ENCODE measurements at regions of chr4 and their contacts with region 1.

Region 1: DNA sequence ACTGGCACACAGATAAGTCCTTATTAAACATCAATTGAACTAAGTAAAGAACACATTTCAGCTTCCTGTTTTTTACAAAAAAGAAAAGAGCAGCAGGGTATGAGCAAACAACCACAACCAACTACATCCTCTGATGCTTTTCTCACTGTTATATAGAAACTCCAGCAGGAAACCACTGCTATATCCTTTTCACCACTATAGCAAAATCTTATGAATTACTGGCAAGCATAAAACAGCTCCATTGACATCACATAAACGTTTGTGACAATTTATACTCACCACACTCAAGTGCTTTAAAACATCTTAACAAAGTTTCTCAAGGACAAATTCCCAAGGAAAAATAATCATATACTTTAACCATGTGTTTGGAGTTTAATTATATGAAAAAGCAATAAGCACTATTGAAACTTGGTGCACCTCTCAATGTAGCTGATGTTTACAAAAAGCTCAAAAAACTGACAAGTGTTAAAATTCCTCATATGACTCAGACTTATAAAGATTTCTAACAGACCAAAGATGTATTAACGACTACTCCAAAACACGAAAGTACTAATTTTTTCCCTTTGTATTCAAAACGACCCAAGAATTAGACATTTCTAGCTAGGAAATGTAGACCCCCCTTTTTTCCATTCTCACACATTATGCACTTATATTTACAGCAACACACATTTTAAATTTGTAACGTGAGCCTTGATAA is 12.9 kb downstream of the GPRIN3 start:
- DNase-seq: no peak
- H3K4me3 Mint-ChIP-seq: peak overlapping the region; percentile 49
- H3K27ac Mint-ChIP-seq: peak overlapping the region; percentile 94
- H3K4me1 Mint-ChIP-seq: peaks cover 79% of the 10 kb centered on the region
- H3K27me3 Mint-ChIP-seq: no peaks in the 10 kb centered on the region

Region 2: DNA sequence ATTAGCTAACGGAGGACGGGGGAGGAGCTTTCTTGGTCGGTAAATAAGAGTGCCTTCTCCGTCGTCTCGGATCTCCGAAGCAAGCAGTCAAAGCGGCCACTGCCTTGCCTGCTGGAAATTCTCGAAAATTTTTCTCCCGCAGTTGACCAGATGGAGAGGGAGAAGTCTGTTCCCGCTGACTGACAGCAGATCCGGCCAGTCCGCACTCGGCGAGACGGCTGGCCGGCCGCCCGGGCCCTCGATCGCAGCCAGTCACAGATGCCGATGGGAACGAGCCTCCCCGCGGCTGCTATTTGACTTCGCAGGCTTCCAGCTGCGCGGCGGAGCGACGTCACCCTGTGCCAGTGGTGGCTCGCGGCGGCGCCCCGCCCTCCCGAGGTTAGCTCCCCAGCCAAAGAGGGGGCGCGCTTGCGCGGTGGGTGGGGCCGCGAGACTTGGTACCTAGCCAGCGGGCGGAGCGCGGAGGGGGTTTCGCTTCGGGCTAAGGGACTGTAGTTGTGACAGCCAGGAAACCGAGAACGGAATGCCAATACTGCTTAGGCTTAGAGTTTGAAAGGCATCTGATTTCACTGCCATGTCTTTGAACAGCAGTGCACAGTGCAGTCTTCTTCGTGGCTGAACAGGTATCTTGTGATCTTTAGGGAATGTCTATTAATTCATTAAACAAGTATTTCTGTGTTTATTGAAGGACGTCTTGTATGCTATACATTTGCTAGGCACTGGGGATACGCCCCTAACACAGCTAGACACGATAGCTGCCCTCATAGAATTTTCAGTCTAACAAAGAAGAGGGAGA is 1010.1 kb before region 1 on chr4 and contains the start of gene PPM1K:
- CTCF ChIA-PET with region 1: no interaction called
- intact Hi-C with region 1: loop called (anchors 10 kb)
- DNase-seq: peak; percentile 99
- H3K4me3 Mint-ChIP-seq: peak within 1 kb of the TSS; percentile 89
- H3K27ac Mint-ChIP-seq: peak within 1 kb of the TSS; percentile 98
- H3K4me1 Mint-ChIP-seq: peaks cover 34% of the 10 kb centered on the region
- H3K27me3 Mint-ChIP-seq: no peaks in the 10 kb centered on the region
- total RNA-seq, gene PPM1K: 54.1 to 55.2 TPM

Region 3: GRCh38 chr4:88803600-88804096 is 491.1 kb before region 1 on chr4:
- CTCF ChIA-PET with region 1: no interaction called
- intact Hi-C with region 1: loop called (anchors 1 kb)
- DNase-seq: peak; percentile 60
- H3K4me3 Mint-ChIP-seq: no peak overlapping the region
- H3K27ac Mint-ChIP-seq: no peak overlapping the region
- H3K4me1 Mint-ChIP-seq: peaks cover 22% of the 10 kb centered on the region
- H3K27me3 Mint-ChIP-seq: no peaks in the 10 kb centered on the region

Region 4: GRCh38 chr4:89110986-89111832 is 183.5 kb before region 1 on chr4 and contains the start of gene TIGD2:
- CTCF ChIA-PET with region 1: no interaction called
- intact Hi-C with region 1: loop called (anchors 5 kb)
- DNase-seq: peak; percentile 81
- H3K4me3 Mint-ChIP-seq: peak within 1 kb of the TSS; percentile 76
- H3K27ac Mint-ChIP-seq: no peak within 1 kb of the TSS
- H3K4me1 Mint-ChIP-seq: peaks cover 11% of the 10 kb centered on the region
- H3K27me3 Mint-ChIP-seq: peaks cover 18% of the 10 kb centered on the region
- total RNA-seq, gene TIGD2: 1.1 to 1.3 TPM

Region 5: DNA sequence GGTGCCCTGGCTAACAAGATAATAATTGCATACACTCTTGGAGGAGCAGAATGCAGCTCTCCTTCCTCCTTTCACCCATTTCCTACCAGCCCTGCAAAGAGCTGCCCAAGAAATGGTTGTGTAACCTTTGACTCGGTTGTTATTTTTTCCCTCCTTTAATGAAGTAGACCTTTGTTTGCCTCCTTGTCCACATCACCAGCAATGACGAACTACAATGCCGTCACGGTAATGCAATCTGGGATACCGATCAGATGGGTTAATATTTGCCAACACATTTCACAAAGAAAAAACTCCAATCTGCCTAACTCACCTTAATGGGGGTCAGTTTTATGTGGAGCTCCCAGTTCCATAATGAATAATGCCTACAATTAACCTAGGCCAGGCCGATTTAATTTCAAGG is 19.1 kb before region 1 on chr4:
- CTCF ChIA-PET with region 1: interaction called, 5 read pairs
- intact Hi-C with region 1: loop called (anchors 2 kb)
- DNase-seq: no peak
- H3K4me3 Mint-ChIP-seq: no peak overlapping the region
- H3K27ac Mint-ChIP-seq: no peak overlapping the region
- H3K4me1 Mint-ChIP-seq: peaks cover 33% of the 10 kb centered on the region
- H3K27me3 Mint-ChIP-seq: no peaks in the 10 kb centered on the region

Region 6: GRCh38 chr4:89324671-89325070 is 29.9 kb after region 1 on chr4:
- CTCF ChIA-PET with region 1: no interaction called
- intact Hi-C with region 1: no loop called
- DNase-seq: no peak
- H3K4me3 Mint-ChIP-seq: no peak overlapping the region
- H3K27ac Mint-ChIP-seq: no peak overlapping the region
- H3K4me1 Mint-ChIP-seq: peaks cover 8% of the 10 kb centered on the region
- H3K27me3 Mint-ChIP-seq: no peaks in the 10 kb centered on the region

Region 7: GRCh38 chr4:89365776-89366175 is 71.1 kb after region 1 on chr4:
- CTCF ChIA-PET with region 1: no interaction called
- intact Hi-C with region 1: loop called (anchors 2 kb)
- DNase-seq: no peak
- H3K4me3 Mint-ChIP-seq: no peak overlapping the region
- H3K27ac Mint-ChIP-seq: no peak overlapping the region
- H3K4me1 Mint-ChIP-seq: peaks cover 13% of the 10 kb centered on the region
- H3K27me3 Mint-ChIP-seq: no peaks in the 10 kb centered on the region

Region 8: GRCh38 chr4:89906777-89907521 is 612.2 kb after region 1 on chr4:
- CTCF ChIA-PET with region 1: no interaction called
- intact Hi-C with region 1: loop called (anchors 10 kb)
- DNase-seq: peak; percentile 8
- H3K4me3 Mint-ChIP-seq: no peak overlapping the region
- H3K27ac Mint-ChIP-seq: no peak overlapping the region
- H3K4me1 Mint-ChIP-seq: peaks cover 2% of the 10 kb centered on the region
- H3K27me3 Mint-ChIP-seq: no peaks in the 10 kb centered on the region